ENCODE measurements at regions of chr9 and their contacts with region 1.

Region 1: GRCh38 chr9:77433675-77434445 is 214.3 kb downstream of the GNA14 start:
- DNase-seq: peak; percentile 66
- ATAC-seq: peak; percentile 92
- H3K4me3 Mint-ChIP-seq: no peak overlapping the region
- H3K27ac Mint-ChIP-seq: 0 out of 2 replicates have a peak overlapping the region, but pooled peaks have one; percentile 8
- H3K4me1 Mint-ChIP-seq: peaks cover 15% of the 10 kb centered on the region
- H3K27me3 Mint-ChIP-seq: no peaks in the 10 kb centered on the region; the same call in 1 of the 2 replicates
- CTCF ChIP-seq: peak; percentile 87

Region 2: DNA sequence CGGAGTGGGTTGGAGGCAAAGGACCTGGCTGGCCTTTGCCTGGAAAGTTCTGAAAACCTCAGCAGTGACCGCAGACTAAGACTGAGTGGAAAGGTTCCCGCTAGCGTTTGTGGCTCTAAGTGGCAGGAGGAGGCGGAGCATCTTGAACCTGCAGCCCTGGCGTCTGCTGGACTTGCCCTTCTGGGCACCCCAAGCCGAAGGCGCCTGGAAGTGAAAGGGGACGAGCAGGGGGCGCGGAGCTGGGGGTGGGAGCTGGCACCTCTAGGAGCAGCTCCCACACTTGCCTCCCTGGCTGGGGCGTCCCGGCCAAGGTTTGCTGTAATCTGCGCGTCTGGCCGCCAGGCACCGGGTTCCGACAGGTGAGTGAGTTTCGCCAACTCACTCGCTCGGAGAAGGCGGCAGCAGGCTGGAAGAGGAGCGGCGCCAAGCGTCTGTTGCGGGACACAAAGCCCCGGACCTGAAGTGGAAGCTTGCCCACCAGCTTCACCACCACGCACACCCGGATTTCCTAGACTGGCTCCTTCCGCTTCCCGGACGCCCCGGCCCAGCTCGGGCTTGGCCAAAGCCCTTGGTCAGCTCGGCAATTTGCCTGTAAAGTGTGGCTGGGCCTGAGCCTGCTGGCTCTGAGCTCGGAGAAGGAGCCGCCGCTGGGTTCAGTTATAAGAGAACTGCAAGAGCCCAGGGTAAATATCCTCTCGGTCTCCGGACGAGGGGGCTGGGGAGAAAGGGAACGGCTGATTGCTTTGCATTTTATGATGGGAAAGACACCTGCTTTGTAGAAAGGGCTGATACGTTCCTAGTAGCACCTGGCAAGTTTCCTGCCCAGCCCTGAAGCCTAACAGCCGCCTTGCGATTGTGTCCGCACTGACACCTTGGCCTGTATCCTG is 214.6 kb after region 1 on chr9 and contains the start of gene GNA14:
- CTCF ChIA-PET with region 1: interaction called, 44 read pairs
- POLR2A ChIA-PET with region 1: no interaction called
- DNase-seq: peak; percentile 75
- ATAC-seq: peak; percentile 59
- H3K4me3 Mint-ChIP-seq: peak within 1 kb of the TSS; percentile 83
- H3K27ac Mint-ChIP-seq: peak within 1 kb of the TSS; percentile 90
- H3K4me1 Mint-ChIP-seq: peaks cover 54% of the 10 kb centered on the region
- H3K27me3 Mint-ChIP-seq: peaks cover 26% of the 10 kb centered on the region
- CTCF ChIP-seq: no peak
- total RNA-seq, gene GNA14: 20.4 to 26.7 TPM (median 21.0 TPM) in 3 replicates

Measured in WTC11 (cell line).